ENCODE measurements at regions of chr17 and their contacts with region 1.

Region 1: DNA sequence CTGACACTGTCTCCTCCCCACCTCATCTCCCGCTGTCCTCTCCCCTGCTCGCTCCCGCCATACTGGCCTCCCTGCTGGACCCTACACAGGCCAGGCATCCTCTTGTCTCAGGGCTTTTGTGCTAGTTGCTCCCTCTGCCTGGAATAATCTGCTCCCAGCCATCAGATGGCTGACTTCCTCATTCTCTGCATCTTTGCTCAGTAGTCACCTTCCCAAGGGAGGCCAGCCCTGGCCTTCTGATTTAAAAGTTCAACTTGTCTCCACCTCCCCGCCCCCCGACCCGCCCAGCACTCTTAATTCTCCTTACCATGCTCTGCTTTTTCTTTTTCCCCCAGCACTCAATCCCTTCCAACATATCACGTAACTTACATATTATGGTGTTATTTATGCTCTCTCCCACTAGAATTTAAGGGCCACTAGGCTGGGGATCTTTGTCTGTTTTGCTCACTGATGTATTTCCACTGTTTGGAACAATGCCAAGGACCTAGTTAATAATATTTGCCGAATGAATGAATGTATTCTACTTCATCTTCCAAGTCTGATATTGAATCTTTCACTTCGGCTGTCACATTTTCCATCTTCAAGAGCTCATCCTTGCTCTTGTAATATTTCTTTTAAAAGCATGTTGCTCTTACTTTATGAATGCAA is 178.3 kb downstream of the CDK5R1 start:
- DNase-seq: no peak
- ATAC-seq: no peak

Region 2: DNA sequence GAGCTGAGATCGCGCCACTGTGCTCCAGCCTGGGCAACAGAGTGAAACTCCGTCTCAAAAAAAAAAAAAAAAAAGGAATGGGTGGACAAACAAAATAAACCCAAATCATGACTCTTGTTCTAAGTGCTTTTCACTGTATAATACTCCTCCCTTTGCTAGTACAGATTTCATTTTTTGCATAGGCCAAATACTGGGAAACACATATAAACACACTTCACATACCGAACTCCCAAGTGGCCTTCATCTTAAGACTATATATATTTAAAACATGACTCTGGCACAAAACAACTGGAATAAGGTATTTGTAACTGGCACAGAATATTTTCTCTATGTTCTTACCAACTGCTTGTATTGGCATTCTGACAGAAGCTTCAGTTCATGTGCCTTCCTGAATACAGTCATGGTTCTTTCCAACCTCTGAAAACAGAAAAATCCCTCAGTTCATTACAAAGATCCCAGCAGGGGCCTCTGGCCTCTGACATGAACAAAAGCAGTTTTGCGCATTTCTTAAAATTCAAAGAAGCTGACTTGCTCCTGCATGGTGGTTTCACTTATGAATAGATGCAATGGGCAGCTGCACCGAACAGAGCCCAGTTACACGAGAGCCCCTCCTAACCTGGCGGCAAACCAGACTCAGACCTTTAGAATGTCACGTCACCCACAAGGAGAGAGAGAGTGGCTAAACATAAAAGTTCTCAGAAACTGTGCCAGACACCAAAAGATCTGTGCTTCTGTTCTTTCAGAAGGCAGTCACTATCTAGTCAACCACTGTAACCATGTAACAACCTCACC is 787.0 kb before region 1 on chr17:
- intact Hi-C with region 1: no loop called
- DNase-seq: no peak
- ATAC-seq: no peak

Region 3: DNA sequence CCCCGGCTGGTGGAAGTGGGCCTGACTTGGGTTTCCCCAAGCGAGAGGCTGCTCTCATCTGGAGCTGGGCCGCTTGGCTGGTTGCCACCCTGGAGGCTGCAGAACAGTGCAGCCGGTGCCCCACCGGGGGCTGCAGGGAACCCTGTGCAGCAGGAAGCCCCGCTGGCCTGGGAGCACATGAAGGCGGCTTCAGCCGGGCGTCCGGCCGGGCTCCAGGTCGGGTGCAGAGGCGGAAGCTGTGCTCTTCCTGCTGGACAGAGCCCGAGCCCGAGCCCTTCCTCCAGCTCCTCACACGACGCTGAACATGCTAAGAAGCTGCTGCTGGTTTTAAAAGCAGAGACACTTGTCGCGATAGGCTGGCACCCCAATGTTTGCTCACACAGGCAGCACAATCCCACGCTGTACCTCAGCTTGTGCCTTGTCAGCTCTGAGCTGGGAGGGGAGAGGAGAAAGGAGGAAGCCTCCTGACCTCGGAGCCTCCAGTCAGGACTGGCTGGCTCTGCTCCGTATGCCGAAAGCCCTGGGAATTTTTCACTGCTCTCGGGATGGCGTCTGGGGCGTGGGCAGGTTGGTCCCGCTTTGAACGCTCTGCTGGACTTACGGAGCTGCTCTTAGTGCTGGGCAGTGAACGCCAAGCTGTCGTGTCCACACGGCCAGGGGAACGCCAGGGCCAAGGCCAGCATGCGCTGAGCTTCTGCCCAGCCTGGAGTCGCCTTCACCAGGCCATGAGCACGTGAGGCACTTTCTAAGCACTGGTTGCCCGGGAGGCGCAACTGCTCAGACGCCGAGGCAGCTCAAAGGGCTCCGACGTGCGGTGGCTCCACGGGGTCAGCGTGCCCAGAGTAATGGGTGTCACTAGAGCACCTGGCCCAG is 169.5 kb before region 1 on chr17:
- intact Hi-C with region 1: no loop called
- DNase-seq: no peak
- ATAC-seq: peak; percentile 6

Region 4: DNA sequence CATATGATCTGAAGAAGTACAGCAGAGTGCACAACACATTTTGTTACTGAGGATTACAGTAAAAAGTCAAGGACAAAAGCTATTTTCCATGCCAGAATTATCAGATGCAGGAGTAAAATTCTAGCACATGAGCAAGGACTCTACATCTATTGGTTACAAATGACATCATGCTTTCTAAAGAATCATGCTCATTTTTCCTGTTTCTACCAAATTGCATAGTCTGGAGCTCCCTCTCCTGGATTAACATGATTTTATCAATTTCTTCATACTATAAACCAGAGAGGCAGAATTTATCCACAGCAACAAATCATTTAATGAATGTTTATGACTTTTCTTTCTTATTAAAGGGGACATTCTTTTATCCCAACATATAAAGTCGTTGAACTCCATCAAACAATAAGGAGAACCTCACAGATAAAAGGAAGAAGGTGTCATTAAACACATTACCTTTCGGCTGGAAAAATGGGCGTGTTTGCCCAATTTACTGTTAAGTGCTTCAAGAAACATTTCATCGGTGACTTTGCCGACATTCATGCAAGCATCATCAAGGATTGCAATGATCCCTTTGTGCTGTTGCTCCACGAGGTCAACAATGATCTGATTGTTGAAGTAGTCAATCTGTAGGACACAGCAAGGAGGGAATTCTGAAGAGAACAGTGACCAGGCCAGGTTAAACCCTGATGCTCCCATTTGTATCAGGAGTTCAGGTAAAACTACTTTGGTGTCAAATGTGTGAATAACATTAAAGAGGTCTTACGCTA is 90.2 kb after region 1 on chr17:
- intact Hi-C with region 1: loop called in 1 of 2 experiments (anchors 10 kb)
- DNase-seq: no peak
- ATAC-seq: peak; percentile 62

Region 5: GRCh38 chr17:32769839-32770238 is 104.8 kb after region 1 on chr17:
- intact Hi-C with region 1: no loop called
- DNase-seq: no peak
- ATAC-seq: peak; percentile 27